Lower leg skin (tissue), 4 donors: ENCODE measurements at regions of chr9 and their contacts with region 1.

Region 1: GRCh38 chr9:108565651-108566378 is 290.0 kb downstream of the ACTL7B start:
- DNase-seq: peak in 1 of 2 donors; percentile 70
- H3K4me3 ChIP-seq: no peak overlapping the region
- CTCF ChIP-seq: peak in 1 of 3 donors; percentile 30
- POLR2A ChIP-seq: no peak

Region 2: GRCh38 chr9:108423433-108423832 is 142.4 kb before region 1 on chr9:
- intact Hi-C with region 1: loop called (anchors 10 kb)
- DNase-seq: no peak
- H3K4me3 ChIP-seq: no peak overlapping the region
- CTCF ChIP-seq: no peak
- POLR2A ChIP-seq: no peak

Region 3: DNA sequence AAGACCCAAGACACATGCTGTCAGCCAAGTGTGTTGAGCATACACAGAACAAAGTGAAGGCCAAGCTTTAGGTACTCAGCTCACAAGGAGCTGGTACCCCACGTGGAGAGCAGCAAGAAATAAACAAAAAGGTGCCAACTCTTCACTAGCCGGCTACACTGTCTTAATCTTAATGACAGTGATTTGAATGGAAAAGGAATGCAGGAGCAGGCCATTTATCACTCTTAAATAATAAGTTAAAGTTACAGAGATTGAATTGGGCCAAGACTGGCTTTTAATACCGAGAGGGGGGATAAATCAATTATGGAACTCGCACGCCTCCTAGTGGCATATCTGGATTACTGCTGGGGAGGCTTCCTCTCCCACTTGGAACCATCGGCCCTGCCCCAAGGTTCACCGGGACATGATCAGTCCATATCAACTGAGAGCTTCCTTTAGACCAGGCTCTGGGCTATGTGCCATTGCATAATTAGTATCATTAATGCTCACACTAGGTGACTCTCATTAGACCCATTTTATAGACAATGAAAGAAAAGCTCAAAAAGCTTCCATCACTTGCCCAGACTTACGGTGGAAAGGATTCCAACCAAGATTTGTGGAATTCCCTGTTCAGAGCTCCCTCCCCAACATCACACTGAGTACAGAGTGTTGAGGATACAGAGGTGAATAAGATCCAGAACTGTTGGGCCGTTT is 196.0 kb after region 1 on chr9:
- intact Hi-C with region 1: loop called (anchors 10 kb)
- DNase-seq: peak; percentile 69 to 91
- H3K4me3 ChIP-seq: no peak overlapping the region
- CTCF ChIP-seq: peak in 1 of 3 donors; percentile 57
- POLR2A ChIP-seq: no peak

Region 4: GRCh38 chr9:109755040-109755439 is 1189.2 kb after region 1 on chr9:
- intact Hi-C with region 1: no loop called
- DNase-seq: no peak
- H3K4me3 ChIP-seq: no peak overlapping the region
- CTCF ChIP-seq: no peak
- POLR2A ChIP-seq: no peak